ENCODE measurements at regions of chr12 and their contacts with region 1.

Region 1: GRCh38 chr12:8890313-8891085 is 23.8 kb upstream of the PHC1 start:
- DNase-seq: no peak
- ATAC-seq: peak; percentile 87
- H3K4me3 Mint-ChIP-seq: peak overlapping the region; percentile 83
- H3K27ac Mint-ChIP-seq: peak overlapping the region; percentile 43
- H3K4me1 Mint-ChIP-seq: peaks cover 5% of the 10 kb centered on the region
- H3K27me3 Mint-ChIP-seq: peaks cover 2% of the 10 kb centered on the region
- CTCF ChIP-seq: peak; percentile 96

Region 2: DNA sequence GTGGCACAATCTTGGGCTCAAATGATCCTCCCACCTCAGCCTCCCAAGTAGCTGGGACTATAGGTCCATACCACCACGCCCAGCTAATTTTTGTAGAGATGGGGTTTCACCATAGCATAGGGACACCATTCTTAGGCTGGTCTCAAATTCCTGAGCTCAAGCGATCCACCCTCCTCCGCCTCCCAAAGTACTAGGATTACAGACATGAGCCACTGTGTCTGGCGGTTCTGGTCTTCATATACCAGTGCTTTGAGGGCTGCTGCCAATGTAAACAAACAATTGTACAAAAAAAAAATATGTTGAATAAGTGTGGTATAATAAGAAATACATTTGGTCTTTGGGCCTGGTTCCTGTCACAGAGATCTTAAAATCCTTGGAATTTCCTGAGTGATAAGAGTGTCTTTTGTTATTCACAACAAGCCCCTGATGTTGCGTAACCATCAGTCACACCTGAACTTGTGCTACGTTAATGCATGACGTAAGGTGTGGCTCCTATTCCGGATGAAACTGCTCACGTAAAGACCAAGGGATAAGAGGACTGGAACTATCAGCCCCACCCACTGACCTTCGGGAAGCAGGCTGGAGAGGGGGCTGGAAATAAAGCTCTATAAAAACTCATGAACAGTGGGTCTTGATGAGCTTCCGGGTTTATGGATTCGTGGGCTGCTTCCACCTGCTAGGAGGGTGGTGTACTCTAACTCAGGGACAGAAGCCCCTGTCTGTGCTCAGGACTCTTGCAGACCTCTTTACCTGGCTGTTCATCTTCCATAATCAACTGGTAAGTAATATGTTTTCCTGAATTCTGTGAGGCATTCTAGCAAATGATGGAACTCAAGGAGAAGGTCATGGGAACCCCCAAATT is 209.2 kb before region 1 on chr12:
- CTCF ChIA-PET with region 1: interaction called, 36 read pairs
- POLR2A ChIA-PET with region 1: no interaction called
- intact Hi-C with region 1: loop called (anchors 1 kb)
- DNase-seq: no peak
- ATAC-seq: no peak
- H3K4me3 Mint-ChIP-seq: no peak overlapping the region
- H3K27ac Mint-ChIP-seq: no peak overlapping the region
- H3K4me1 Mint-ChIP-seq: peaks cover 1% of the 10 kb centered on the region
- H3K27me3 Mint-ChIP-seq: peaks cover 5% of the 10 kb centered on the region
- CTCF ChIP-seq: no peak

Region 3: DNA sequence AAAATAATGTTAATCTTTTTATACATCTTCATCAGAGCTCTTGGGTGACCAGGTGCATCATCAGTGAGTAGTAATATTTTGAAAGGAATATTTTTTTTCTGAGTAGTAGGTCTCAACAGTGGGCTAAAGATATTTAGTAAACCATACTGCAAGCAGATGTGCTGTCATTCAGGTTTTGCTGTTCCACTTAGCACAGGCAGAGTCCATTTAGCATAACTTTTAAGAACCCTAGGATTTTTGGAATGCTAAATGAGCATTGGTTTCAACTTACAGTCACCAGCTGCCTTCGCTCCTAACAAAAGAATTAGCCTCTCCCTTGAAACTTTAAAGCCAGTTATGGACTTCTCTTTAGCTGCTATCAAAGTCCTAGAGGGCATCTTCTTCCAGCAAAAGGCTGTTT is 168.2 kb before region 1 on chr12:
- CTCF ChIA-PET with region 1: no interaction called
- POLR2A ChIA-PET with region 1: no interaction called
- intact Hi-C with region 1: no loop called
- DNase-seq: no peak
- ATAC-seq: no peak
- H3K4me3 Mint-ChIP-seq: no peak overlapping the region
- H3K27ac Mint-ChIP-seq: no peak overlapping the region
- H3K4me1 Mint-ChIP-seq: peaks cover 11% of the 10 kb centered on the region
- H3K27me3 Mint-ChIP-seq: no peaks in the 10 kb centered on the region
- CTCF ChIP-seq: no peak

Region 4: GRCh38 chr12:8903646-8904045 is 13.1 kb after region 1 on chr12:
- CTCF ChIA-PET with region 1: interaction called, 4 read pairs
- POLR2A ChIA-PET with region 1: interaction called, 15 read pairs
- intact Hi-C with region 1: no loop called
- DNase-seq: no peak
- ATAC-seq: no peak
- H3K4me3 Mint-ChIP-seq: peak overlapping the region; percentile 44
- H3K27ac Mint-ChIP-seq: peak overlapping the region; percentile 68
- H3K4me1 Mint-ChIP-seq: peaks cover 45% of the 10 kb centered on the region
- H3K27me3 Mint-ChIP-seq: no peaks in the 10 kb centered on the region
- CTCF ChIP-seq: no peak

Region 5: GRCh38 chr12:8996682-8997360 is 106.3 kb after region 1 on chr12:
- CTCF ChIA-PET with region 1: no interaction called
- POLR2A ChIA-PET with region 1: no interaction called
- intact Hi-C with region 1: no loop called
- DNase-seq: no peak
- ATAC-seq: peak; percentile 54
- H3K4me3 Mint-ChIP-seq: no peak overlapping the region
- H3K27ac Mint-ChIP-seq: no peak overlapping the region
- H3K4me1 Mint-ChIP-seq: no peaks in the 10 kb centered on the region
- H3K27me3 Mint-ChIP-seq: no peaks in the 10 kb centered on the region
- CTCF ChIP-seq: no peak

Region 6: DNA sequence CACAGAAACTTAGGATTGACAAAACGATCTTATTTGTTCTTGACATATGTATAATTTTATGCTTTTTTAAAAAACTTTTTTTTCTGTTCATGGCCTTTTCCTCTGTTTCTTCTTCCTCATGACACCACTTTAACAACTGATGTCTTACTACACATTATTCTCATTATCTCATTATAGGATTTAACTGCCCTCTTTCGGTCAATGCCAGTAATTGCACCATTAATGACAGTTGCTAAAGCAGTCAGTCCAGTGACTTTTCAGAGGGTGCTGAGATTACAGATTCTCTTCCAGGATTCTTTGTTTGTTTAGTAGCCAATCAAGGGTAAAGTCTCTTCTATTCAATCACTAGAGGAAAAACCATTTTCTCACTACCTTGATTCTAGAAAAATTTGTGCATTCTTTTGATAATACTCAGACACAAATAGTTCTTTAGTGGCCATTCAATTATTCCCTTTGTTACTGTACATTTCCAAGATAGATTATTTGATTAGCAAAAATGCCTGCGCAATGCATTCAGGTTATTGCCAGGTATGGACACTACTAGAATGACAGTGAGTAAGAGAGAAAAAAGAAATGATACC is 149.0 kb after region 1 on chr12:
- CTCF ChIA-PET with region 1: interaction called, 5 read pairs
- POLR2A ChIA-PET with region 1: no interaction called
- intact Hi-C with region 1: loop called (anchors 1 kb)
- DNase-seq: no peak
- ATAC-seq: peak; percentile 69
- H3K4me3 Mint-ChIP-seq: no peak overlapping the region
- H3K27ac Mint-ChIP-seq: no peak overlapping the region
- H3K4me1 Mint-ChIP-seq: no peaks in the 10 kb centered on the region
- H3K27me3 Mint-ChIP-seq: peaks cover 2% of the 10 kb centered on the region
- CTCF ChIP-seq: peak; percentile 63

Measured in activated B cell treated with CpG ODN at 0.5 μM for 24 hours (primary cell).